ENCODE measurements at regions of chr3 and their contacts with region 1.

Region 1: DNA sequence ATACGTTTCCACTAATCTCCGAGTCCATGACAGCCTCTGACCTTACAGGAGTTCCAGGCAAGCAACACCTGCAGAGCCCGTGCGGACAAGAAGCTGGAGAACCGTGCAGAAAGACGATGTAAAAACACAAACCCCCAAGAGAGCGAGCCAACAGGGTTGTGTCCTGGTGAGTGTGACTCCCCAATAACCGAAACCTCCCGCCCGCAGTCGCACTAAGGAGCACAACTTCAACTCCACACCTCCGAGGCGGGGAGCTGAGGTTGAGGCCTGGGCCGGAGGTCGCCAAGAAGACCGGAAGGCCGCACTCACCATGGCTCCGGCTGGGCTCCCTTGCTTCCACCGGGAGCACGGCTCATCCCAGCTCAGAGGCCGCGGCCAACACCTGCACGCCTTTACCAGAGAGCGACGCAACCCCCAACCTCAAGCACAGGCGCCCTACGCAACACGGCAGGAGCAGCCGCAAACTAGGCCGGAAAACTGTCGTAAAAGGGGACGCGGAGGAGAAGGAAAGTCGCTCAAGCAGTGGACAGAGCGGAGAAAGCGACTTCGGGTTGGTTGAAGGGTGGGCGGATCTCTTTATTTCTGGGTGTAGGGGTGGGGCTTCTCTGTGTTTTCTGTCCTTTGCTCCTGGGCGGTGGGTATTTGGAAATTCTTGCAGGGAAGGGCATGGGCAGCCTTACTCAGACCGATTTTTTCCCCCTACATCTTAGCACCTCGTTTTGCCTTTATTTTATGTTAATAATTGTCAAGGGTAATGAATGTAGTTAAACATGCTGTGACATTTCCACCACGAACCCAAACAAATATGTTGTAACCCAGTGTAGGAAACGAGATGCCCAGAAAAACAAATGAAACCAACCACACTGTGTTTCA is at the start of gene DNAJC19:
- DNase-seq: peak; percentile 85 to 95 (median 93)
- H3K4me3 ChIP-seq: peak within 1 kb of the TSS; percentile 69
- H3K4me3 Mint-ChIP-seq: peak within 1 kb of the TSS; percentile 89 to 100 (median 98)
- H3K27ac ChIP-seq: peak within 1 kb of the TSS; percentile 76
- H3K27ac Mint-ChIP-seq: peak within 1 kb of the TSS; percentile 90 to 99 (median 96)
- H3K4me1 ChIP-seq: peaks cover 20% of the 10 kb centered on the region
- H3K4me1 Mint-ChIP-seq: peaks cover 32 to 56% (median 50%) of the 10 kb centered on the region in 3 donors
- H3K27me3 ChIP-seq: no peaks in the 10 kb centered on the region
- H3K27me3 Mint-ChIP-seq: peaks cover 0 to 3% of the 10 kb centered on the region in 2 donors
- total RNA-seq, gene DNAJC19: 70.2 to 72.0 TPM

Region 2: GRCh38 chr3:180930526-180930925 is 59.0 kb before region 1 on chr3:
- CTCF ChIA-PET with region 1: no interaction called
- POLR2A ChIA-PET with region 1: interaction called, 14 read pairs
- DNase-seq: no peak
- H3K4me3 ChIP-seq: no peak overlapping the region
- H3K4me3 Mint-ChIP-seq: peak overlapping the region in 3 of 7 donors; percentile 34 to 55 (median 38)
- H3K27ac ChIP-seq: no peak overlapping the region
- H3K27ac Mint-ChIP-seq: peak overlapping the region in 4 of 8 donors; percentile 6 to 36 (median 23)
- H3K4me1 ChIP-seq: peaks cover 20% of the 10 kb centered on the region
- H3K4me1 Mint-ChIP-seq: peaks cover 61 to 91% (median 84%) of the 10 kb centered on the region in 3 donors
- H3K27me3 ChIP-seq: no peaks in the 10 kb centered on the region
- H3K27me3 Mint-ChIP-seq: no peaks in the 10 kb centered on the region

Measured in CD8-positive, alpha-beta memory T cell (primary cell).